ENCODE measurements at regions of chr1 and their contacts with region 1.

Region 1: GRCh38 chr1:165392634-165393571 is 36.4 kb upstream of the LMX1A start:
- DNase-seq: peak; percentile 86
- H3K4me3 ChIP-seq: no peak overlapping the region
- H3K27ac ChIP-seq: no peak overlapping the region
- H3K4me1 ChIP-seq: peaks cover 6% of the 10 kb centered on the region
- H3K27me3 ChIP-seq: no peaks in the 10 kb centered on the region
- CTCF ChIP-seq: peak; percentile 89 to 91 (median 91)
- POLR2A ChIP-seq: no peak

Region 2: DNA sequence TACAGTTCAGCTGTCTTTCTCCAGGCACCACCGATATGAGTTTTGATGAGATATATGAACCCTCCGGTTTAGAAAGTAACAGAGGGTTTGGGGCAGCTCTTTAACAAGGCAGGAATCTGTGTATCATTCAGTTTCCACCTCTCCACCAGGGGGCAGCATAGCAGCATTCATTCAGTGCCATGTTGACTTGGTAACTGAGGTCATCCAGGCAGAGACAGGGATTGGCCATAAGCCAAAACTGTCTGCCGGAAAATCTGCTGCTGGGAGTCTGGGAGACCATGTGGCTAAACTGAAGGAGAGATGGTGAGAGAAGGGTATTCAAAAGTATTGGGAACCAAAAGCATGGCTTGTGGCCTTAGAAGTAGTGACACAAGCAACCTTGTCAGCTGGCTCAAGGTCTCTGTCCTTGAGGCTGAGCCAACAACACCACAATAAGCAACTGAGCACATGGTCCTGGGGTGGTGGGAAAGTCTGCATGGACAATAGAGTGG is 134.9 kb before region 1 on chr1:
- intact Hi-C with region 1: no loop called
- DNase-seq: peak; percentile 88
- H3K4me3 ChIP-seq: no peak overlapping the region
- H3K27ac ChIP-seq: no peak overlapping the region
- H3K4me1 ChIP-seq: no peaks in the 10 kb centered on the region
- H3K27me3 ChIP-seq: no peaks in the 10 kb centered on the region
- CTCF ChIP-seq: peak; percentile 49 to 78 (median 52)
- POLR2A ChIP-seq: no peak

Region 3: DNA sequence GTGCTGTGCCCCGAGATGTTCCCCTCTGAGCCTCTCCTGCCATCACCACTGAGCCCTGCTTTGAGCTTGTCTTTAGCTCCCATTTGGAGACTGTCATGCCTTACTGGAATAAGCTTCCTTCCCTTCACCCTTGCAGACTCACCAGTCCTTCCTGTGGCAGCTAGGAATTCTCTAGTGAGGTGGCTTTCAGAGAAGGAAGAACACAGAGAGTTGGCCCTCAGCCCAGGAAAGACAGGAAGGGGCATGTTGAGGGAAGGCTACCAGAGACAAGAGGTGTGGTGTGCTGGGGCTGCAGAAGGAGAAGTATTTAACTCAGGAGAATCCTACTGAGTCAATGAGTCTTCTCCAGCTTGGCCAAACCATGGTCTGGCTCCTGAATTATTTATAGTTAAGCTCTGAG is 510.8 kb after region 1 on chr1:
- intact Hi-C with region 1: loop called (anchors 10 kb)
- DNase-seq: no peak
- H3K4me3 ChIP-seq: no peak overlapping the region
- H3K27ac ChIP-seq: no peak overlapping the region
- H3K4me1 ChIP-seq: no peaks in the 10 kb centered on the region
- H3K27me3 ChIP-seq: no peaks in the 10 kb centered on the region
- CTCF ChIP-seq: no peak
- POLR2A ChIP-seq: no peak